Activated T-helper 1 cell treated with anti-CD3 and anti-CD28 coated beads, Interleukin-12 subunit alpha, Interleukin-12 subunit beta, Interleukin-2, Interleukin-4 antibody, amounts not matched to agents 30 ng/mL and 10 ng/mL and 1 ng/mL, durations not matched to agents 14 hours and 24 hours and 36 hours (primary cell): ENCODE measurements at regions of chr7 and their contacts with region 1.

Region 1: DNA sequence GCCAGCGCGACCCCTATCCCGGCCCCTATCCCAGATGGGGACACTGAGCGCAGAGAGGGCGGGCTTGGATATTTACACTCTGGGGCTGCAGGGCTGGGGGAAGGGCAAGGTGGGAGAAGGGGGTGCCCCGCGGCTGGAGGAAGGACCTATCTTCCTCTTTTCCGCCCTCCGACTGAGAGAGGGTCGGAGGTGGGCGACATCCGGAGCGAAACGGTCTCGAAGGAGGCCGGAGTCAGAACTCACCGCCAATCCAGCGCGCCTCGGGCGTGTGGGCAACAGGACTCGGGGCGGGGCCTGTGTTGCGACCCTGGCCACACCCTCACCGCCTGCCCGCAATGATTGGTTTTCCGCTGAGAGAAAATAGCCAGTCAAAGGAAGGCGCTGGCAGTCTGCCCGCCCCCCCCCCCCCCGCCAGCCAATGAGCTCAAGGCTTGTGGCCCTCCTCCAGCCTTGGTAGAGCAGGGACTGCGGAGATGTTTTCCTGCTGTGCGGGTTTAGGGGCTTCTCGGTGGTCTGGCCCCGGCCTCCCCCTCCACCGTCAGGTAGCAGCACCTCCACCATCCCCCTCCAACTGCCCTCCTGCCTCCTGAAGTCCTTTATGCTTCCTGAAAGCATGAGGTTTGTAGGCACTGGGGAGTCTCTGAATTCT is at the start of gene METTL27:
- DNase-seq: peak; percentile 87
- H3K4me3 Mint-ChIP-seq: peak within 1 kb of the TSS; percentile 83
- H3K27ac Mint-ChIP-seq: peak within 1 kb of the TSS; percentile 73
- H3K4me1 Mint-ChIP-seq: peaks cover 10% of the 10 kb centered on the region
- H3K27me3 Mint-ChIP-seq: peaks cover 10% of the 10 kb centered on the region
- total RNA-seq, gene METTL27: 1.2 and 1.8 TPM in 2 replicates

Region 2: GRCh38 chr7:73623798-73624668 is 218.3 kb before region 1 on chr7 and contains the start of gene MLXIPL:
- intact Hi-C with region 1: loop called (anchors 1 kb)
- DNase-seq: peak; percentile 38
- H3K4me3 Mint-ChIP-seq: no peak within 1 kb of the TSS
- H3K27ac Mint-ChIP-seq: no peak within 1 kb of the TSS
- H3K4me1 Mint-ChIP-seq: no peaks in the 10 kb centered on the region
- H3K27me3 Mint-ChIP-seq: peaks cover 49% of the 10 kb centered on the region
- total RNA-seq, gene MLXIPL: not detected in 2 replicates